Ascending aorta (tissue), 2 donors: ENCODE measurements at regions of chr14 and their contacts with region 1.

Region 1: GRCh38 chr14:57390028-57390805 is at the start of gene NAA30:
- DNase-seq: peak; percentile 83 to 96
- H3K4me3 ChIP-seq: peak within 1 kb of the TSS; percentile 76 to 79
- H3K27ac ChIP-seq: peak within 1 kb of the TSS; percentile 84 to 90
- H3K4me1 ChIP-seq: peaks cover 12% of the 10 kb centered on the region in 2 donors
- H3K27me3 ChIP-seq: no peaks in the 10 kb centered on the region
- CTCF ChIP-seq: no peak
- total RNA-seq, gene NAA30: 6.2 TPM

Region 2: GRCh38 chr14:56247468-56248200 is 1142.6 kb before region 1 on chr14:
- intact Hi-C with region 1: no loop called
- DNase-seq: no peak
- H3K4me3 ChIP-seq: no peak overlapping the region
- H3K27ac ChIP-seq: no peak overlapping the region
- H3K4me1 ChIP-seq: no peaks in the 10 kb centered on the region
- H3K27me3 ChIP-seq: no peaks in the 10 kb centered on the region
- CTCF ChIP-seq: no peak

Region 3: DNA sequence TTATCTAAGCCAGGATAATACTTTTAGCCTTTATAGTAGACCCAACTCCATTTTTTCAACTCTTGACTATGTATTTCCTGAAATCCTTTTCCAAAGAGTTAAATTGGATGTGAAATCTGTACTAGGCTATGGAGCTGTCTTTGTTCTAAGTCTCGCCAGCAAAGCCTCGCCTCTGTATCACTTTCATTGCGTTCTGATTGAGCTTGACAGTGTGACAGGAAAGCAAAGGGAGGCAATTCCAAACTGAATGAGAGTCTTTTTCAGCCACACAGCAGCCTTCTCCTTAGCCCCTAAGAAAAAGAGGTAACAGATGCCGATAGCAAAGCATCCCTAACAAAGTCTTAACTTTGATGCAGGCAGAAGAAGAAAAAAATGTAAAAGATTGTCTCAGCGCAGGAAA is 425.3 kb before region 1 on chr14:
- intact Hi-C with region 1: no loop called
- DNase-seq: no peak
- H3K4me3 ChIP-seq: no peak overlapping the region
- H3K27ac ChIP-seq: no peak overlapping the region
- H3K4me1 ChIP-seq: no peaks in the 10 kb centered on the region
- H3K27me3 ChIP-seq: no peaks in the 10 kb centered on the region
- CTCF ChIP-seq: no peak

Region 4: GRCh38 chr14:57362361-57362760 is 27.9 kb before region 1 on chr14:
- intact Hi-C with region 1: no loop called
- DNase-seq: no peak
- H3K4me3 ChIP-seq: no peak overlapping the region
- H3K27ac ChIP-seq: no peak overlapping the region
- H3K4me1 ChIP-seq: no peaks in the 10 kb centered on the region
- H3K27me3 ChIP-seq: no peaks in the 10 kb centered on the region
- CTCF ChIP-seq: no peak

Region 5: GRCh38 chr14:58082491-58083098 is 692.4 kb after region 1 on chr14:
- intact Hi-C with region 1: loop called (anchors 10 kb)
- DNase-seq: peak in 1 of 2 donors; percentile 66
- H3K4me3 ChIP-seq: no peak overlapping the region
- H3K27ac ChIP-seq: peak overlapping the region; percentile 76 to 86
- H3K4me1 ChIP-seq: peaks cover 4 to 20% of the 10 kb centered on the region in 2 donors
- H3K27me3 ChIP-seq: no peaks in the 10 kb centered on the region
- CTCF ChIP-seq: no peak

Region 6: GRCh38 chr14:58239244-58240195 is 849.3 kb after region 1 on chr14:
- intact Hi-C with region 1: loop called (anchors 5 kb)
- DNase-seq: peak; percentile 20 to 86
- H3K4me3 ChIP-seq: peak overlapping the region; percentile 68 to 76
- H3K27ac ChIP-seq: peak overlapping the region; percentile 79 to 86
- H3K4me1 ChIP-seq: no peaks in the 10 kb centered on the region
- H3K27me3 ChIP-seq: no peaks in the 10 kb centered on the region
- CTCF ChIP-seq: no peak